Activated B cell treated with CpG ODN at 0.5 μM for 24 hours (primary cell): ENCODE measurements at regions of chr3 and their contacts with region 1.

Region 1: DNA sequence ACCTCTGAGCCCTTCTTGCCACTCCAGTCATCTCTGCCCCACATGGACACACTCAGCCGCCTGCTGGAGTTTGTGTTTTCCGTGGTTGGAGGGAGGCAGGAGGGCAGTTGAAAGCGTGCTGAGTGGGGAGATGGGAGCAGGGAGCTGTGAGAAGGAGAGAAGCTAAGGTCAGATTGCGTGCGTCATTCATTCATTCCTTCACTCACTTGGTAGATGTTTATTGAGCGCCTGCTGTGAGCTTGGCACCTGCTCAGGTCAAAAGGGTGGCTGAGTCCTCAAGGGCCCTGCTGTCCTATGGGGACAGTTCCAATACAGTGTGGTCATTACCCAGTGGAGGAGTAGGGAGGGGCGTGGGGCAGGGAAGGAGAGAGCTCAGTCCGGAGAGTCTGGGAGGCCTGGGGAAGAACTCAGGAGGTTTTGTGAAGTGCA is 23.5 kb downstream of the LIMD1 start:
- DNase-seq: no peak
- ATAC-seq: no peak
- H3K4me3 Mint-ChIP-seq: no peak overlapping the region
- H3K27ac Mint-ChIP-seq: peak overlapping the region; percentile 53
- H3K4me1 Mint-ChIP-seq: peaks cover 54% of the 10 kb centered on the region
- H3K27me3 Mint-ChIP-seq: no peaks in the 10 kb centered on the region
- CTCF ChIP-seq: no peak

Region 2: GRCh38 chr3:45567730-45568172 is 50.3 kb before region 1 on chr3:
- CTCF ChIA-PET with region 1: no interaction called
- POLR2A ChIA-PET with region 1: interaction called, 10 read pairs
- intact Hi-C with region 1: loop called (anchors 5 kb)
- DNase-seq: peak; percentile 21
- ATAC-seq: peak; percentile 61
- H3K4me3 Mint-ChIP-seq: peak overlapping the region; percentile 45
- H3K27ac Mint-ChIP-seq: peak overlapping the region; percentile 80
- H3K4me1 Mint-ChIP-seq: peaks cover 55% of the 10 kb centered on the region
- H3K27me3 Mint-ChIP-seq: no peaks in the 10 kb centered on the region
- CTCF ChIP-seq: no peak

Region 3: GRCh38 chr3:45635477-45636256 is 17.6 kb after region 1 on chr3:
- CTCF ChIA-PET with region 1: no interaction called
- POLR2A ChIA-PET with region 1: interaction called, 11 read pairs
- intact Hi-C with region 1: no loop called
- DNase-seq: no peak
- ATAC-seq: no peak
- H3K4me3 Mint-ChIP-seq: no peak overlapping the region
- H3K27ac Mint-ChIP-seq: peak overlapping the region; percentile 35
- H3K4me1 Mint-ChIP-seq: peaks cover 49% of the 10 kb centered on the region
- H3K27me3 Mint-ChIP-seq: no peaks in the 10 kb centered on the region
- CTCF ChIP-seq: no peak

Region 4: GRCh38 chr3:46299608-46300460 is 681.7 kb after region 1 on chr3:
- CTCF ChIA-PET with region 1: no interaction called
- POLR2A ChIA-PET with region 1: interaction called, 11 read pairs
- intact Hi-C with region 1: no loop called
- DNase-seq: no peak
- ATAC-seq: peak; percentile 79
- H3K4me3 Mint-ChIP-seq: no peak overlapping the region
- H3K27ac Mint-ChIP-seq: peak overlapping the region; percentile 2
- H3K4me1 Mint-ChIP-seq: peaks cover 56% of the 10 kb centered on the region
- H3K27me3 Mint-ChIP-seq: no peaks in the 10 kb centered on the region
- CTCF ChIP-seq: no peak